ENCODE measurements at regions of chr3 and their contacts with region 1.

Region 1: DNA sequence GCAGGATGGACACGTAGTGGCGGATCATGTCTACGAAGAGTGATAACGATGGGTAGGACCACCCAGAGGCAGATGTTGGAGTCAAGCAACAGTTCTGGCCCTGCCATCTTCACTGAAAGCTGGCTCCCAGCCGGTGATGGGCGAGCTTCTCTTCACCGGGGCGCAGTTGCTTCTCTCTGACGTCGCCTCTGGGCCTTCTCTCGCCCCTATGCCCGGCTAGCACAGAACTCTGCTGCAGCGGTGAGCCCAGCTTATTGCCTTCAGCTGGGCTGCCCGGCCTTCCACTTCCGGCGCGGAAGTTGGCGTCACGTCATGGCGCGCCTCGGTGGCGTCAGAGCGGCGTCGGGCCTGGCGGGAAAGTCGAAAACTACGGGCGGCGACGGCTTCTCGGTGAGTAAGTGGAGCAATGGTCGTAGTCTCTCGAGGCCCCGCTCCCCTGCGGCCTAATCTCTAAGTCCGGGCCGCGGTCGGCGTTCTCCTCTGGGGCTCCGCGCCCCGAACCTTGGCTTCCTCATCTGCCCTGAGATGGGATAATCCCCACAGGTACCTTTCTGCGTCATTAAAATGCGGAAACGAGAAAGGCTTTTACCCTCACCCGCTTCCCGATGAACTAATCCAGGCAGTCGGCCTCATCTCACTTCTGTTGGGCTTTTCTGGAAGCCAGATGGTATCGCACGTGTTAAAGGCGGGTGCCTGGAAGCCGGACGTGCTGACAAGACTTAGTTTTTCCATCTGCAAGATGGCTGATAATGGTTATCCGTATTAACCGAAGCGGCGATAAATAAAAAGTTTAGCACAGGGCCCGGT is at the start of gene FANCD2:
- DNase-seq: peak; percentile 60 to 82
- ATAC-seq: peak; percentile 94 to 95
- H3K4me3 ChIP-seq: peak within 1 kb of the TSS; percentile 63 to 90 (median 80)
- H3K27ac ChIP-seq: peak within 1 kb of the TSS; percentile 78 to 82 (median 80)
- H3K4me1 ChIP-seq: peaks cover 17 to 20% of the 10 kb centered on the region in 2 donors
- H3K27me3 ChIP-seq: no peaks in the 10 kb centered on the region
- CTCF ChIP-seq: no peak
- POLR2A ChIP-seq: peak; percentile 67 to 76
- total RNA-seq, gene FANCD2: 0.46 to 1.3 (median 0.58) TPM in 3 of 4 donors, not detected in the other

Region 2: GRCh38 chr3:9986237-9986725 is 40.0 kb before region 1 on chr3:
- in situ Hi-C with region 1: no loop called
- intact Hi-C with region 1: loop called (anchors 2 kb)
- DNase-seq: no peak
- ATAC-seq: peak; percentile 42 to 45
- H3K4me3 ChIP-seq: peak overlapping the region; percentile 82 to 99 (median 89)
- H3K27ac ChIP-seq: peak overlapping the region; percentile 82 to 89 (median 88)
- H3K4me1 ChIP-seq: peaks cover 35 to 39% of the 10 kb centered on the region in 2 donors
- H3K27me3 ChIP-seq: no peaks in the 10 kb centered on the region
- CTCF ChIP-seq: no peak
- POLR2A ChIP-seq: no peak